K562 (cell line): ENCODE measurements at regions of chr1 and their contacts with region 1.

Region 1: GRCh38 chr1:197868751-197869489 is 33.5 kb upstream of the C1orf53 start:
- DNase-seq: peak; percentile 23 to 81 (median 46)
- ATAC-seq: peak; percentile 99
- H3K4me3 ChIP-seq: no peak overlapping the region
- H3K27ac ChIP-seq: no peak overlapping the region
- H3K4me1 ChIP-seq: no peaks in the 10 kb centered on the region
- H3K27me3 ChIP-seq: no peaks in the 10 kb centered on the region
- CTCF ChIP-seq: peak; percentile 66 to 86 (median 70)
- EP300 ChIP-seq: no peak
- POLR2A ChIP-seq: no peak
- RAD21 ChIP-seq: peak; percentile 87 to 97

Region 2: DNA sequence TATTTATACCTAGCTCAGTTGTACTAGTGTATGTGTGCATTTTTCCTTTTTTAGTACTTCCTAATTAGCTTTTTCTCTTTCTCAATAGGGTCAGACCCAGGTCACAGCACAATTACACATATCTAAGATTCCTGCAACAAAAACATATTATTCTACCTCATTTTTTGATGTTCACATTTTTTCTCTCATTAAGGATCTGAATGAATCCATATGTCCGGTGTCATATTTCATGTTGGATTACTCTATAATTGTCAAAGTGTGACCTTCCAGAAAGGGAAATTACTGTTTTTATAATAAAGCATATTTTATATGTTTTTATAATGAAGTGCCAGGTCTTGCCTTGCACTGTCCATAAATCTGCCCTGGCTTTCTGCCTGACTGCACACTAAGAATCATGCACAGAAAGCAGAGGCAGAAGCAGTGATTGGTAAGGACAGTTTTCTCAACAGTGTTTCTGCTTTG is 1404.4 kb before region 1 on chr1:
- CTCF ChIA-PET with region 1: no interaction called
- POLR2A ChIA-PET with region 1: no interaction called
- in situ Hi-C with region 1: no loop called
- intact Hi-C with region 1: no loop called
- DNase-seq: no peak
- ATAC-seq: no peak
- H3K4me3 ChIP-seq: no peak overlapping the region
- H3K27ac ChIP-seq: no peak overlapping the region
- H3K4me1 ChIP-seq: no peaks in the 10 kb centered on the region
- H3K27me3 ChIP-seq: no peaks in the 10 kb centered on the region
- CTCF ChIP-seq: no peak
- EP300 ChIP-seq: no peak
- POLR2A ChIP-seq: no peak
- RAD21 ChIP-seq: no peak

Region 3: DNA sequence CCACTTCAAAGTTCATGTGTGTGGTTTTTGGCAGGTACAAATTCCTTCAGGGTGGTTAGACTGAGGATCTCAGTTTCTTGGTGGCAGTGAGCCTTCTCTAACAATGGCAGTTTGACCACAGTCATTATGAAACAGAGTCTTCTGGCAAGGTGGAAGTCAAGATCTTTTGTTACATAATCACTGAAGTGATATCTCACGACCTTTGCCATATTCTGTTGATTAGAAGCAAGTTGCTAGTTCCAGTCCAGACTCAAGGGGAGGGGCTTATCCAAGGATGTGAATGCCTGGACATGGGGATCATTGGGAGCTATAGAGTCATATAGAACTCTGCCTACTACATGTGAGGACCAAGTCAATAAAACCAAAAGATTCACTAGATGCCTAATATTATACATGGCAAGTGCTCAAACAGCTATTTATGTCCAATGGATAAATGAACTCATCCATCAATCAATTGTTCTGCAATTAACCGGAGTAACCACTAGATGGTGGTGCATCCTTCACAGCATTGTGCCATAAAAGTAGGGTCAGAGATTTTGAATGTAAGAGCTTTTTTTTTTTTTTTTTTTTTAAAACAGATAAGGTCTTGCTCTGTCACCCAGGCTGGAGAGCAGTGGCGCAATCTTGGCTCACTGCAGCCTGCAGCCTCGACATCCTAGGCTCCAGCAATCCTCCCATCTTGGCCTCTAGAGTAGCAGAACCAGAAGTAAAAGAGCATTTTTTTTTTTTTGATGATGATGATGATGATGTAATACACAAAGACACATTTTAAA is 469.0 kb before region 1 on chr1:
- CTCF ChIA-PET with region 1: no interaction called
- POLR2A ChIA-PET with region 1: no interaction called
- in situ Hi-C with region 1: no loop called
- intact Hi-C with region 1: loop called (anchors 2 kb)
- DNase-seq: peak; percentile 29 to 66 (median 49)
- ATAC-seq: peak; percentile 96
- H3K4me3 ChIP-seq: no peak overlapping the region
- H3K27ac ChIP-seq: no peak overlapping the region
- H3K4me1 ChIP-seq: no peaks in the 10 kb centered on the region
- H3K27me3 ChIP-seq: peaks cover 3 to 11% of the 10 kb centered on the region in 2 experiments; a peak in 2 of 5 replicates
- CTCF ChIP-seq: peak; percentile 60 to 76 (median 68)
- EP300 ChIP-seq: no peak
- POLR2A ChIP-seq: no peak
- RAD21 ChIP-seq: peak; percentile 74 to 81

Region 4: GRCh38 chr1:197464044-197464443 is 404.9 kb before region 1 on chr1:
- CTCF ChIA-PET with region 1: no interaction called
- POLR2A ChIA-PET with region 1: no interaction called
- in situ Hi-C with region 1: no loop called
- intact Hi-C with region 1: no loop called
- DNase-seq: no peak
- ATAC-seq: no peak
- H3K4me3 ChIP-seq: no peak overlapping the region
- H3K27ac ChIP-seq: no peak overlapping the region
- H3K4me1 ChIP-seq: no peaks in the 10 kb centered on the region
- H3K27me3 ChIP-seq: no peaks in the 10 kb centered on the region
- CTCF ChIP-seq: no peak
- EP300 ChIP-seq: no peak
- POLR2A ChIP-seq: no peak
- RAD21 ChIP-seq: no peak

Region 5: DNA sequence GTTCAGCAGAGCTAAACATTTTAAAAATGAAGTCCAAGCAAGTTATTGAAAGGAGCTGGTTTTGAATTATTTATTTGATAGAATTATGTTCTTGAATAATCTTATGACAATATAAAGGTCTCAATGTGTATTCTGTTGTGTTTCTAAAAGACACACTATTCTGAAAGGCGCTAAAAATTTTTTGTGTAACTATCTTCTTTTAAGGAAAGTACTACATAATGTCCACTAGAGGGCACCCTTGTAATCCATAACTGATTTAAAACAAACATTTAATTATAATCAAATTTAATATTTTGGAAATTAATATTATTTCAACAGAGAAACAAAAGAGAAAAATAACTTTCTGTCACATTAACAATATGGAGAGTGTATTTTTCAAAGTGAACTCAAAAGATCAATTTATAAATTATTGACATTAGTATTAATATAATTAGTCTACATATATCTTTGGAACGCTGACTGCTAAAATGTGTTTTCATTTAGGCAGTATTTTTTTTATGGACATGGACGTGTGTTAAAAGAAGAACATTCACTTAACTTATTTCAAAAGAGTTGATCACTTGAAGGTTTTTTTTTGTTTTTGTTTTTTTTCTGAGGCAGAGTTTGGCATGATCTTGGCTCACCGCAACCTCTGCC is 342.1 kb before region 1 on chr1:
- CTCF ChIA-PET with region 1: interaction called, 3 read pairs
- POLR2A ChIA-PET with region 1: no interaction called
- in situ Hi-C with region 1: no loop called
- intact Hi-C with region 1: loop called (anchors 1 kb)
- DNase-seq: peak; percentile 21 to 55 (median 26)
- ATAC-seq: no peak
- H3K4me3 ChIP-seq: no peak overlapping the region
- H3K27ac ChIP-seq: no peak overlapping the region
- H3K4me1 ChIP-seq: no peaks in the 10 kb centered on the region
- H3K27me3 ChIP-seq: no peaks in the 10 kb centered on the region
- CTCF ChIP-seq: peak in 2 of 3 experiments; percentile 23 to 71; a peak in 3 of 6 replicates
- EP300 ChIP-seq: no peak
- POLR2A ChIP-seq: no peak
- RAD21 ChIP-seq: peak; percentile 62 to 73

Region 6: GRCh38 chr1:197620714-197621163 is 248.2 kb before region 1 on chr1:
- CTCF ChIA-PET with region 1: interaction called, 12 read pairs
- POLR2A ChIA-PET with region 1: no interaction called
- in situ Hi-C with region 1: loop called (anchors 5 kb)
- intact Hi-C with region 1: loop called (anchors 1 kb)
- DNase-seq: no peak
- ATAC-seq: no peak
- H3K4me3 ChIP-seq: no peak overlapping the region
- H3K27ac ChIP-seq: no peak overlapping the region
- H3K4me1 ChIP-seq: no peaks in the 10 kb centered on the region
- H3K27me3 ChIP-seq: no peaks in the 10 kb centered on the region
- CTCF ChIP-seq: no peak
- EP300 ChIP-seq: no peak
- POLR2A ChIP-seq: no peak
- RAD21 ChIP-seq: no peak

Region 7: GRCh38 chr1:197775282-197776262 is 93.3 kb before region 1 on chr1 and contains the start of gene DENND1B:
- CTCF ChIA-PET with region 1: no interaction called
- POLR2A ChIA-PET with region 1: no interaction called
- in situ Hi-C with region 1: no loop called
- intact Hi-C with region 1: loop called (anchors 2 kb)
- DNase-seq: peak; percentile 74 to 92 (median 80)
- ATAC-seq: peak; percentile 81
- H3K4me3 ChIP-seq: peak within 1 kb of the TSS; percentile 71
- H3K27ac ChIP-seq: peak within 1 kb of the TSS; percentile 83
- H3K4me1 ChIP-seq: peaks cover 21 to 36% of the 10 kb centered on the region in 2 experiments
- H3K27me3 ChIP-seq: no peaks in the 10 kb centered on the region
- CTCF ChIP-seq: peak in 2 of 3 experiments; percentile 13 to 28; a peak in 2 of 6 replicates
- EP300 ChIP-seq: no peak
- POLR2A ChIP-seq: peak; percentile 66
- RAD21 ChIP-seq: peak; percentile 10 to 20; a peak in 1 of 4 replicates
- polyA plus RNA-seq, gene DENND1B: 2.1 to 3.3 TPM

Region 8: GRCh38 chr1:197994907-197995407 is 126.0 kb after region 1 on chr1:
- CTCF ChIA-PET with region 1: no interaction called
- POLR2A ChIA-PET with region 1: no interaction called
- in situ Hi-C with region 1: no loop called
- intact Hi-C with region 1: loop called (anchors 5 kb)
- DNase-seq: peak in 2 of 4 experiments; percentile 10 to 34
- ATAC-seq: peak; percentile 78
- H3K4me3 ChIP-seq: peak overlapping the region; percentile 41
- H3K27ac ChIP-seq: peak overlapping the region; percentile 73
- H3K4me1 ChIP-seq: no peaks in the 10 kb centered on the region
- H3K27me3 ChIP-seq: no peaks in the 10 kb centered on the region
- CTCF ChIP-seq: no peak
- EP300 ChIP-seq: peak; percentile 67; the same call in 1 of the 2 replicates
- POLR2A ChIP-seq: no peak
- RAD21 ChIP-seq: no peak

Region 9: GRCh38 chr1:198253668-198254067 is 384.7 kb after region 1 on chr1:
- CTCF ChIA-PET with region 1: no interaction called
- POLR2A ChIA-PET with region 1: no interaction called
- in situ Hi-C with region 1: no loop called
- intact Hi-C with region 1: no loop called
- DNase-seq: peak in 1 of 4 experiments; percentile 31
- ATAC-seq: peak; percentile 77
- H3K4me3 ChIP-seq: no peak overlapping the region
- H3K27ac ChIP-seq: no peak overlapping the region
- H3K4me1 ChIP-seq: peaks cover 4 to 5% of the 10 kb centered on the region in 2 experiments; a peak in 4 of 5 replicates
- H3K27me3 ChIP-seq: no peaks in the 10 kb centered on the region
- CTCF ChIP-seq: no peak
- EP300 ChIP-seq: no peak
- POLR2A ChIP-seq: no peak
- RAD21 ChIP-seq: no peak